BJ (cell line): ENCODE measurements at regions of chr4 and their contacts with region 1.

Region 1: GRCh38 chr4:153008578-153009199 is 72.6 kb downstream of the FHDC1 start:
- DNase-seq: no peak
- H3K4me3 ChIP-seq: no peak overlapping the region
- H3K27me3 ChIP-seq: peaks cover 9% of the 10 kb centered on the region; the same call in 1 of the 2 replicates
- CTCF ChIP-seq: no peak

Region 2: DNA sequence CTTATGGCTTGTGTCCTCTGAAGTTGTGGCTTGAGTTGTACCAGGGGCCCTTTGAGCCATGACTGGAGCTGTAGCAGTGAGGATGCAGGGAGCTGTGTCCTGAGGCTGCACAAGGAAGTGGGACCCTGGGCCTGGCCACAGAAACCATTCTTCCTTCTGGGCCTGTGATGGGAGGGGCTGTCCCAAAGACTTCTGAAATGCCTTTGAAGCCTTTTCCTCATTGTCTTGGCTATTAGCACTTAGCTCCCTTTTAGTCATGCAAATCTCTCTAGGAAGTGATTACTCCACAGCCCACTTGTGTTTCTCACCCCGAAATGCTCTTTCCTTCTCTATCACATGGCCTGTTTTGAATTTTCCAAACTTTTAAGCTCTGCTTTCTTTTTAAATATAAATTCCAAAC is 19.8 kb after region 1 on chr4:
- CTCF ChIA-PET with region 1: no interaction called
- POLR2A ChIA-PET with region 1: no interaction called
- DNase-seq: no peak
- H3K4me3 ChIP-seq: no peak overlapping the region
- H3K27me3 ChIP-seq: peaks cover 8% of the 10 kb centered on the region; the same call in 1 of the 2 replicates
- CTCF ChIP-seq: no peak

Region 3: GRCh38 chr4:153045111-153045982 is 36.7 kb after region 1 on chr4:
- CTCF ChIA-PET with region 1: interaction called, 3 read pairs
- POLR2A ChIA-PET with region 1: interaction called, 12 read pairs
- DNase-seq: no peak
- H3K4me3 ChIP-seq: no peak overlapping the region
- H3K27me3 ChIP-seq: peaks cover 1% of the 10 kb centered on the region; the same call in 1 of the 2 replicates
- CTCF ChIP-seq: no peak

Region 4: GRCh38 chr4:153204247-153205027 is 195.7 kb after region 1 on chr4 and contains the start of gene TRIM2:
- CTCF ChIA-PET with region 1: no interaction called
- POLR2A ChIA-PET with region 1: no interaction called
- DNase-seq: no peak
- H3K4me3 ChIP-seq: no peak within 1 kb of the TSS
- H3K27me3 ChIP-seq: no peaks in the 10 kb centered on the region
- CTCF ChIP-seq: no peak
- polyA plus RNA-seq, gene TRIM2: 24.5 and 34.1 TPM in 2 replicates